K562 (cell line): ENCODE measurements at regions of chr18 and their contacts with region 1.

Region 1: GRCh38 chr18:24659827-24660720 is 199.6 kb downstream of the HRH4 start:
- DNase-seq: no peak
- ATAC-seq: no peak
- H3K4me3 ChIP-seq: no peak overlapping the region
- H3K27ac ChIP-seq: no peak overlapping the region
- H3K4me1 ChIP-seq: no peaks in the 10 kb centered on the region
- H3K27me3 ChIP-seq: 0 out of 5 replicates have a peak, but pooled peaks cover 0 to 6% of the 10 kb centered on the region in 2 experiments
- CTCF ChIP-seq: no peak
- EP300 ChIP-seq: no peak
- POLR2A ChIP-seq: no peak
- RAD21 ChIP-seq: no peak

Region 2: GRCh38 chr18:24613896-24614640 is 46.0 kb before region 1 on chr18:
- CTCF ChIA-PET with region 1: no interaction called
- POLR2A ChIA-PET with region 1: no interaction called
- in situ Hi-C with region 1: no loop called
- intact Hi-C with region 1: loop called (anchors 5 kb)
- DNase-seq: no peak
- ATAC-seq: no peak
- H3K4me3 ChIP-seq: no peak overlapping the region
- H3K27ac ChIP-seq: no peak overlapping the region
- H3K4me1 ChIP-seq: no peaks in the 10 kb centered on the region
- H3K27me3 ChIP-seq: no peaks in the 10 kb centered on the region
- CTCF ChIP-seq: no peak
- EP300 ChIP-seq: no peak
- POLR2A ChIP-seq: no peak
- RAD21 ChIP-seq: no peak